Heart left ventricle (tissue), 16 donors: ENCODE measurements at regions of chr10 and their contacts with region 1.

Region 1: GRCh38 chr10:63720072-63720537 is 198.9 kb downstream of the REEP3 start:
- DNase-seq: peak in 1 of 5 donors; percentile 28
- ATAC-seq: peak in 1 of 4 donors; percentile 49
- H3K4me3 ChIP-seq: no peak overlapping the region
- H3K27ac ChIP-seq: peak overlapping the region in 5 of 12 donors; percentile 22 to 74 (median 31)
- H3K4me1 ChIP-seq: peaks cover 0 to 32% (median 13%) of the 10 kb centered on the region in 12 donors
- H3K27me3 ChIP-seq: no peaks in the 10 kb centered on the region
- CTCF ChIP-seq: peak; percentile 93 to 99 (median 98)
- POLR2A ChIP-seq: no peak

Region 2: DNA sequence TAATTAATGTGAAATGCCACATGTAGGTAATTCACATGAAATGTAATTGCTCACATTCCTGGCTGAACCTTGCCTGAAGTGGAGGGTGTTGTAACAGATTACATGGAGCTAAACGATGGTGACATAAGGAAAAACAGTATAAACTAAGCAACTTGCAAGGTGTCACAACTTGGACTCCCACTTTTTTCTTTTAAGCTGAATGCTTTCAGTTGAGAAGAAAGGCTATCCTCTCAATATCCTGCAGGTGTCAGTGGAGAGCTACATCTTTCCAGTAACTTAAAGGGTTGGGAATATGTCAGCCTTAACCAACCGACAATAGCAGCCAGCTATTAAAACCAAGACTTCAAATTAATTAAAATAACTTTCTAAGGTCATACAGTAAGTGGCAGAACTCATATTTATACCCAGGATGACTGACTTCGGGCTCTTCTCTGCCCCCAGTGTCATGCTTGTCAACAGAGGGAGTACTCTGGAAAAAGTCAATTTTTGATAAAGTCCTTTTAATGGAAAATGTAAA is 553.3 kb before region 1 on chr10:
- intact Hi-C with region 1: loop called (anchors 1 to 5 kb)
- DNase-seq: peak in 1 of 5 donors; percentile 32
- ATAC-seq: peak; percentile 47 to 72 (median 68)
- H3K4me3 ChIP-seq: no peak overlapping the region
- H3K27ac ChIP-seq: peak overlapping the region in 1 of 12 donors; percentile 0
- H3K4me1 ChIP-seq: peaks cover 0 to 37% (median 17%) of the 10 kb centered on the region in 12 donors
- H3K27me3 ChIP-seq: no peaks in the 10 kb centered on the region
- CTCF ChIP-seq: peak; percentile 64 to 92 (median 82)
- POLR2A ChIP-seq: no peak

Region 3: GRCh38 chr10:63206997-63207811 is 512.9 kb before region 1 on chr10:
- intact Hi-C with region 1: loop called in 2 of 10 experiments (anchors 5 to 10 kb)
- DNase-seq: peak in 4 of 5 donors; percentile 40 to 50 (median 44)
- ATAC-seq: peak; percentile 65 to 84 (median 80)
- H3K4me3 ChIP-seq: peak overlapping the region in 6 of 12 donors; percentile 5 to 20 (median 14)
- H3K27ac ChIP-seq: peak overlapping the region; percentile 29 to 85 (median 67)
- H3K4me1 ChIP-seq: peaks cover 3 to 78% (median 60%) of the 10 kb centered on the region in 12 donors
- H3K27me3 ChIP-seq: no peaks in the 10 kb centered on the region
- CTCF ChIP-seq: no peak
- POLR2A ChIP-seq: no peak

Region 4: GRCh38 chr10:63465293-63466143 is 254.6 kb before region 1 on chr10 and contains the start of gene JMJD1C:
- intact Hi-C with region 1: loop called in 4 of 10 experiments (anchors 5 to 10 kb)
- DNase-seq: peak; percentile 84 to 91 (median 86)
- ATAC-seq: peak; percentile 69 to 94 (median 90)
- H3K4me3 ChIP-seq: peak within 1 kb of the TSS; percentile 65 to 93 (median 86)
- H3K27ac ChIP-seq: peak within 1 kb of the TSS; percentile 87 to 96 (median 92)
- H3K4me1 ChIP-seq: peaks cover 0 to 40% (median 18%) of the 10 kb centered on the region in 12 donors
- H3K27me3 ChIP-seq: no peaks in the 10 kb centered on the region
- CTCF ChIP-seq: peak in 2 of 12 donors; percentile 7 to 40
- POLR2A ChIP-seq: peak in 1 of 2 donors; percentile 60
- total RNA-seq, gene JMJD1C: 27.0 to 54.6 (median 42.7) TPM

Region 5: GRCh38 chr10:63629363-63630084 is 90.6 kb before region 1 on chr10:
- intact Hi-C with region 1: loop called in 1 of 10 experiments (anchors 5 kb)
- DNase-seq: peak; percentile 96 to 98 (median 97)
- ATAC-seq: peak; percentile 78 to 87 (median 80)
- H3K4me3 ChIP-seq: peak overlapping the region; percentile 14 to 71 (median 60)
- H3K27ac ChIP-seq: peak overlapping the region; percentile 93 to 99 (median 98)
- H3K4me1 ChIP-seq: peaks cover 9 to 41% (median 29%) of the 10 kb centered on the region in 12 donors
- H3K27me3 ChIP-seq: no peaks in the 10 kb centered on the region
- CTCF ChIP-seq: peak; percentile 64 to 90 (median 78)
- POLR2A ChIP-seq: no peak

Region 6: DNA sequence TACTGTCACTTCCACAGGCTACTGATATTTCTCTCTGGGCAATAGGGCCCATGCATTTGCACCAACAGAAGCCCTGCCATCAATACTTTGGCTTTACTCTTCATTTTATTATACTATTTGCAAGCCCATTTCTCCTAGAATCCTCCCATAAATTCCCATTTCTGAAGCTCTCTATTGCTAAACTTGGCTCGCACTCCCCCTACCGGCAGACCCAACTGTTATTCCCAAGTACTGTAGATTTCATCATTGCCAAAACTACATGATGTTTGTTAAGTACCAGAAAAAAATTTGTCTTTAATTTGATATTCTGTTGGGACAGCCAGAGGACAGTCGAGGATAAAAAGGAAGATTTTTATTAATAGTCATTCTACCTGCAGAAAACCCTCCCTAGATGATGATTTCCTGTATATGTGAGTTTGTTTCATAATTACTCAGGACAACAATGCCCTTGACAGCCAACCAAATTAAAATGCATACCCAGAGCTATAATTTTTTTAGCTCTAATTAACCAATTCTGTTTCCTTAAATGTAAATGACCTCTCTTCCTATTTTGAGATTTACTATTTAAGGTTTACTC is 99.7 kb after region 1 on chr10:
- intact Hi-C with region 1: loop called in 1 of 10 experiments (anchors 10 kb)
- DNase-seq: peak; percentile 67 to 78 (median 70)
- ATAC-seq: peak; percentile 42 to 57 (median 55)
- H3K4me3 ChIP-seq: no peak overlapping the region
- H3K27ac ChIP-seq: no peak overlapping the region
- H3K4me1 ChIP-seq: peaks cover 0 to 9% (median 0%) of the 10 kb centered on the region in 12 donors
- H3K27me3 ChIP-seq: peaks cover 0 to 2% (median 0%) of the 10 kb centered on the region in 9 donors
- CTCF ChIP-seq: peak; percentile 61 to 86 (median 77)
- POLR2A ChIP-seq: no peak